CD4-positive, alpha-beta memory T cell (primary cell): ENCODE measurements at regions of chr20 and their contacts with region 1.

Region 1: GRCh38 chr20:46307139-46307998 is 929 bp downstream of the CDH22 start:
- DNase-seq: peak; percentile 73 to 78 (median 76)
- H3K4me3 ChIP-seq: peak overlapping the region in 1 of 2 donors; percentile 38
- H3K4me3 Mint-ChIP-seq: peak overlapping the region; percentile 57 to 86 (median 74)
- H3K27ac ChIP-seq: no peak overlapping the region
- H3K27ac Mint-ChIP-seq: no peak overlapping the region
- H3K4me1 ChIP-seq: peaks cover 12% of the 10 kb centered on the region
- H3K4me1 Mint-ChIP-seq: peaks cover 8 to 26% (median 16%) of the 10 kb centered on the region in 4 donors
- H3K27me3 ChIP-seq: peaks cover 42% of the 10 kb centered on the region
- H3K27me3 Mint-ChIP-seq: peaks cover 42 to 68% of the 10 kb centered on the region in 2 donors

Region 2: GRCh38 chr20:46022411-46023147 is 284.8 kb before region 1 on chr20:
- CTCF ChIA-PET with region 1: no interaction called
- POLR2A ChIA-PET with region 1: no interaction called
- intact Hi-C with region 1: loop called (anchors 5 kb)
- DNase-seq: peak; percentile 59 to 73 (median 62)
- H3K4me3 ChIP-seq: peak overlapping the region; percentile 19 to 57
- H3K4me3 Mint-ChIP-seq: peak overlapping the region; percentile 16 to 82 (median 64)
- H3K27ac ChIP-seq: no peak overlapping the region
- H3K27ac Mint-ChIP-seq: no peak overlapping the region
- H3K4me1 ChIP-seq: peaks cover 16% of the 10 kb centered on the region
- H3K4me1 Mint-ChIP-seq: peaks cover 10 to 30% (median 12%) of the 10 kb centered on the region in 4 donors
- H3K27me3 ChIP-seq: peaks cover 27% of the 10 kb centered on the region
- H3K27me3 Mint-ChIP-seq: peaks cover 25 to 48% of the 10 kb centered on the region in 2 donors

Region 3: GRCh38 chr20:46283426-46284039 is 23.8 kb before region 1 on chr20:
- CTCF ChIA-PET with region 1: no interaction called
- POLR2A ChIA-PET with region 1: no interaction called
- intact Hi-C with region 1: no loop called
- DNase-seq: no peak
- H3K4me3 ChIP-seq: no peak overlapping the region
- H3K4me3 Mint-ChIP-seq: no peak overlapping the region
- H3K27ac ChIP-seq: no peak overlapping the region
- H3K27ac Mint-ChIP-seq: no peak overlapping the region
- H3K4me1 ChIP-seq: no peaks in the 10 kb centered on the region
- H3K4me1 Mint-ChIP-seq: no peaks in the 10 kb centered on the region
- H3K27me3 ChIP-seq: peaks cover 5% of the 10 kb centered on the region
- H3K27me3 Mint-ChIP-seq: peaks cover 30 to 37% of the 10 kb centered on the region in 2 donors

Region 4: GRCh38 chr20:46296526-46297250 is 10.7 kb before region 1 on chr20:
- CTCF ChIA-PET with region 1: no interaction called
- POLR2A ChIA-PET with region 1: no interaction called
- intact Hi-C with region 1: no loop called
- DNase-seq: no peak
- H3K4me3 ChIP-seq: no peak overlapping the region
- H3K4me3 Mint-ChIP-seq: no peak overlapping the region
- H3K27ac ChIP-seq: no peak overlapping the region
- H3K27ac Mint-ChIP-seq: no peak overlapping the region
- H3K4me1 ChIP-seq: no peaks in the 10 kb centered on the region
- H3K4me1 Mint-ChIP-seq: no peaks in the 10 kb centered on the region
- H3K27me3 ChIP-seq: peaks cover 8% of the 10 kb centered on the region
- H3K27me3 Mint-ChIP-seq: peaks cover 36 to 53% of the 10 kb centered on the region in 2 donors

Region 5: DNA sequence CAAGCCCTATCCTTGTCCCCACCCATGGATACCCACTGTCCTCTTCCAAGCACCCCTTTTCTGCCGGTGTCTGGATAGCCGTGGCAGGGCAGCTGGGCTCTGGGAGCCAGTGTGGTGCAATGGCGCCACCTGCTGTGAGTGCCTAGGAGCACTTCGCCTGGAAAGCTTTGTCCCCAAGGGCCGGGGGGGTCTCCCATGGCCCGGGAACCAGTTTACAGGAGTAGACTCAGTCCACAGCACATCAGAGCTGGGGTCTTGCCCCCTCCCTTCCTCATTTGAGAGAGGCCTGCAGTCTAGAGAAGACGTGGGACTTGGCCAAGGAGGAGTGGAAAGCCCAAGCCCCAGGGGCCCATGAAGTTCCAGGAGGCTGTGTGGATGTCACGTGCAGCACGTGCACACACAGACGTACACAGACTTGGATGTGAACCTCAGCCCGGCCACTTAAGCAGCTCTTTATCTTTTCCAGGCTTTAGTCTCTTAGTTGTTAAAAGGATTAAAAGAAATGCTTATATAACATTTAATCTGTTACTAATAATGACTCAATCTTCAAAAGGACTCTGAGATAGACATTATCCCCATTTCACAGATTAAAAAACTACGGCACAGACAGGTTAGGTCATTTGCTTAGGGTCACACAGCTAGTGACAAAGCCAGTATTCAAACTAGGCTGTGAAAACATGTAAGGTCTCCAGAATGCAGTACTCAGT is 41.8 kb after region 1 on chr20:
- CTCF ChIA-PET with region 1: interaction called, 5 read pairs
- POLR2A ChIA-PET with region 1: no interaction called
- intact Hi-C with region 1: loop called (anchors 5 kb)
- DNase-seq: peak in 4 of 5 donors; percentile 30 to 42 (median 36)
- H3K4me3 ChIP-seq: no peak overlapping the region
- H3K4me3 Mint-ChIP-seq: no peak overlapping the region
- H3K27ac ChIP-seq: no peak overlapping the region
- H3K27ac Mint-ChIP-seq: peak overlapping the region in 5 of 7 donors; percentile 9 to 82 (median 46)
- H3K4me1 ChIP-seq: peaks cover 5% of the 10 kb centered on the region
- H3K4me1 Mint-ChIP-seq: peaks cover 15 to 37% (median 21%) of the 10 kb centered on the region in 4 donors
- H3K27me3 ChIP-seq: no peaks in the 10 kb centered on the region
- H3K27me3 Mint-ChIP-seq: no peaks in the 10 kb centered on the region

Region 6: GRCh38 chr20:46363800-46364634 is 56.6 kb after region 1 on chr20:
- CTCF ChIA-PET with region 1: no interaction called
- POLR2A ChIA-PET with region 1: interaction called, 3 read pairs
- intact Hi-C with region 1: loop called (anchors 5 kb)
- DNase-seq: peak; percentile 82 to 89 (median 86)
- H3K4me3 ChIP-seq: peak overlapping the region; percentile 73 to 95
- H3K4me3 Mint-ChIP-seq: peak overlapping the region; percentile 88 to 97 (median 92)
- H3K27ac ChIP-seq: peak overlapping the region; percentile 99
- H3K27ac Mint-ChIP-seq: peak overlapping the region; percentile 84 to 99 (median 98)
- H3K4me1 ChIP-seq: peaks cover 78% of the 10 kb centered on the region
- H3K4me1 Mint-ChIP-seq: peaks cover 63 to 83% (median 73%) of the 10 kb centered on the region in 4 donors
- H3K27me3 ChIP-seq: no peaks in the 10 kb centered on the region
- H3K27me3 Mint-ChIP-seq: no peaks in the 10 kb centered on the region

Region 7: DNA sequence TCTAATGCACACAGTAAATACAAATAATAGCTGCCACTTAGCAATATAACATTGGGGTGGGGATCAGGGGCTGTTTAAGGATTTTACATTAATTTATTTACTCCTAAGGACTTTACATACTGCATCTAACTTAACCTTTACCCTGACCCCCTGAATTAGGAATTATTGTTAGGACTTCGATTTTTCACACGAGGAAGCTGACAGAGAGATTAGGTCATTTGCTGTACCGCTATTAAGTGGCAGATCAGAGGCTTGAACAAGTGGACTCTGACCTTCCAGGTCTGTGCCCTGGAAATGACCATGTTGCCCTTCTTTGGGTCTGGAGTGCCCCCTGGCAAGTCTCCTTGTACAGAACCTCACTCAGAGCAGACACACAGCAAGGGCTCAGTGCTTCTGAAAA is 104.3 kb after region 1 on chr20:
- CTCF ChIA-PET with region 1: interaction called, 12 read pairs
- POLR2A ChIA-PET with region 1: interaction called, 5 read pairs
- intact Hi-C with region 1: loop called (anchors 1 kb)
- DNase-seq: no peak
- H3K4me3 ChIP-seq: no peak overlapping the region
- H3K4me3 Mint-ChIP-seq: no peak overlapping the region
- H3K27ac ChIP-seq: no peak overlapping the region
- H3K27ac Mint-ChIP-seq: peak overlapping the region in 3 of 7 donors; percentile 23 to 96 (median 43)
- H3K4me1 ChIP-seq: peaks cover 21% of the 10 kb centered on the region
- H3K4me1 Mint-ChIP-seq: peaks cover 17 to 33% (median 27%) of the 10 kb centered on the region in 4 donors
- H3K27me3 ChIP-seq: no peaks in the 10 kb centered on the region
- H3K27me3 Mint-ChIP-seq: peaks cover 4 to 19% of the 10 kb centered on the region in 2 donors

Region 8: DNA sequence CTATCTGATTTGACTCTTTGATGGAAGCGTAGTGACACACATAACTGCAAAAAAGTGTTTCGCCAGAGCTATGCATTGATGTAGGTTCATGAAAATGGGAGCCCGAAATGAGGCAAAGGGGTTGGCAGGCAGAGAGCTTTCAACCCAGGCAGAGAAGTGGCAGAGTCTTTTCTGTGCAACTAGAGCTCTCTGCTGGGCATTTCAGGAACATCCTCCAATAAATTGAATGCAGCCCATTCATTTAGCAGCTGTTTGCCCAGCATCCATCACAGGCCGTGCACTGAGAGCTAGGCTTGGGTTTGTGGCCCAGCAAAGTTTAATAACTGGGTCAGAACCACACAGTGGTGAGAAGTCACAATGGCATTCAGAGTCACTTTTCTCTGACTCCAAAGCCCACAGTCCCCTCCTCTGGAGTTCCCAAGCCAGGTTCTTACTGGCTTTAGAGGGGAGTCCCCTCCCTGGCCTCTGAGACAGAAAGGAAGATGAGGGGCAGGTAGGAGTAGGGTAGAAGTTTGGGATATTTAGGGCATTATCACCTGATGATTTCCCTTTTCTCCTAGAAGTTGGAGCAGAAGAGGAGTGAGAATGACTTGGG is 130.9 kb after region 1 on chr20:
- CTCF ChIA-PET with region 1: interaction called, 4 read pairs
- POLR2A ChIA-PET with region 1: no interaction called
- intact Hi-C with region 1: loop called (anchors 1 kb)
- DNase-seq: peak in 4 of 5 donors; percentile 18 to 29 (median 24)
- H3K4me3 ChIP-seq: no peak overlapping the region
- H3K4me3 Mint-ChIP-seq: no peak overlapping the region
- H3K27ac ChIP-seq: no peak overlapping the region
- H3K27ac Mint-ChIP-seq: no peak overlapping the region
- H3K4me1 ChIP-seq: no peaks in the 10 kb centered on the region
- H3K4me1 Mint-ChIP-seq: no peaks in the 10 kb centered on the region
- H3K27me3 ChIP-seq: no peaks in the 10 kb centered on the region
- H3K27me3 Mint-ChIP-seq: peaks cover 18 to 26% of the 10 kb centered on the region in 2 donors

Region 9: GRCh38 chr20:46562373-46563169 is 255.2 kb after region 1 on chr20:
- CTCF ChIA-PET with region 1: no interaction called
- POLR2A ChIA-PET with region 1: no interaction called
- intact Hi-C with region 1: loop called (anchors 5 kb)
- DNase-seq: peak in 4 of 5 donors; percentile 26 to 45 (median 34)
- H3K4me3 ChIP-seq: no peak overlapping the region
- H3K4me3 Mint-ChIP-seq: no peak overlapping the region
- H3K27ac ChIP-seq: no peak overlapping the region
- H3K27ac Mint-ChIP-seq: no peak overlapping the region
- H3K4me1 ChIP-seq: no peaks in the 10 kb centered on the region
- H3K4me1 Mint-ChIP-seq: peaks cover 0 to 4% (median 2%) of the 10 kb centered on the region in 4 donors
- H3K27me3 ChIP-seq: no peaks in the 10 kb centered on the region
- H3K27me3 Mint-ChIP-seq: peaks cover 6 to 10% of the 10 kb centered on the region in 2 donors